ENCODE measurements at regions of chr12 and their contacts with region 1.

Region 1: DNA sequence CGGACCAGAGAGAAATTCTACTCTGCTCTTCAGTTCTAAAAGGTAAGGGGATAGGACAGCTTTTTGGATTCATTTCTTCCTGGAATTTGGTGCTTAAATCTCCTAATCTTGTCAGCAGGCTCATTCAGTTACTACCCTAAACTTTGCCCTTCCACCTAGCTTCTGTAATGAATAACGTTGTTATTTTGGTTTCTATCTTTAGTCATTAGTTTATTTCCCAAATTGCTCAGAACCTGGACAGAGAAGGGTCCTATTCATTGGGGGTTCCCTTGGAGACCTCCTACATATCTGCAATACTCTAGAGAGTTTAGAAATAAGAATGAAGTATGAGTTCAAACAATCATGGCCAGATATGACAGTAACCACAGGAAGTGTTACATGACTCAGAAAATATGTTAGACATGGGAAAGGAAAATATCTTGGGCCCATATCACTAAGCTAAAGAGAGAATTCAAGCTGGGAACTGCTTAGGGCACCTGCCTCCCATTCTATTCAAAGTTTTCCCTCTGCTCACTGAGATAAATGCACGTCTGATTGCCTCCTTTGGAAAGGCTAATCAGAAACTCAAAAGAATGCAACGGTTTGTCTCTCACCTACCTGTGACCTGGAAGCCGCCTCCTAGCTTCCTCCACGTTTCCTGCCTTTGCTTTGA is 87.9 kb downstream of the GAS2L3 start:
- DNase-seq: no peak
- ATAC-seq: no peak
- H3K4me3 ChIP-seq: no peak overlapping the region
- H3K27ac ChIP-seq: no peak overlapping the region
- H3K4me1 ChIP-seq: no peaks in the 10 kb centered on the region
- H3K27me3 ChIP-seq: no peaks in the 10 kb centered on the region
- CTCF ChIP-seq: no peak

Region 2: DNA sequence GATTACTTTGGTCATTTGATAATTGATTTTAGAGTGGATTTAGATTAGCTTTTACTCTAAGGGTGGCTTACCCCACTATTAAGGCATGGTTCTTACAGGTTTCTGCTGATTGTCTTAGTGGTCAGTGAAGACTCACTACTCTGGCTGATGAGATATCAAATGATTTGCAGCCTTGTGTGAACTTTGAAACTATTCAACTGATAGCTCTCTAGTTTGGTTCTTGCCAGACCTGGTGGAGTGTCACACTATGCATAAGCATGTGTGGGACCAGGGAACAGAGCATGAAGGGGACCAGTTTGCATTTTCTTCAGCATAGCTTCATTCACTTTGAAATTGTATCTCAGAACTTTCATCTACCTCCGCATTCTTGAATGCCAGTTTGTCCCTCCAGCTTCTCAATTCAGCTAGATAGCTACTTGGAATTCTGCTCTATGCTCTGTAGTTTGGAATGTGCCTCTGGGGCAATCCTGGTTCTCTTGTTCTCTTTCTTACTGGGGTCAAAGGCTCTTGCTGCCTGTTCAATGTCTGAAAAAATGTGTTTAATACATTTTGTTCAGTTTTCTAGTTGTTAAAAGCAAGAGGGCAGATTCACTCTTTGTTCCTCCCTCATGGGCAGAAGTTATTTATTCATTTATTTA is 381.7 kb before region 1 on chr12:
- CTCF ChIA-PET with region 1: interaction called, 10 read pairs
- POLR2A ChIA-PET with region 1: no interaction called
- in situ Hi-C with region 1: no loop called
- intact Hi-C with region 1: no loop called
- DNase-seq: no peak
- ATAC-seq: no peak
- H3K4me3 ChIP-seq: no peak overlapping the region
- H3K27ac ChIP-seq: no peak overlapping the region
- H3K4me1 ChIP-seq: peaks cover 6% of the 10 kb centered on the region; the same call in 1 of the 2 replicates
- H3K27me3 ChIP-seq: no peaks in the 10 kb centered on the region
- CTCF ChIP-seq: no peak

Region 3: DNA sequence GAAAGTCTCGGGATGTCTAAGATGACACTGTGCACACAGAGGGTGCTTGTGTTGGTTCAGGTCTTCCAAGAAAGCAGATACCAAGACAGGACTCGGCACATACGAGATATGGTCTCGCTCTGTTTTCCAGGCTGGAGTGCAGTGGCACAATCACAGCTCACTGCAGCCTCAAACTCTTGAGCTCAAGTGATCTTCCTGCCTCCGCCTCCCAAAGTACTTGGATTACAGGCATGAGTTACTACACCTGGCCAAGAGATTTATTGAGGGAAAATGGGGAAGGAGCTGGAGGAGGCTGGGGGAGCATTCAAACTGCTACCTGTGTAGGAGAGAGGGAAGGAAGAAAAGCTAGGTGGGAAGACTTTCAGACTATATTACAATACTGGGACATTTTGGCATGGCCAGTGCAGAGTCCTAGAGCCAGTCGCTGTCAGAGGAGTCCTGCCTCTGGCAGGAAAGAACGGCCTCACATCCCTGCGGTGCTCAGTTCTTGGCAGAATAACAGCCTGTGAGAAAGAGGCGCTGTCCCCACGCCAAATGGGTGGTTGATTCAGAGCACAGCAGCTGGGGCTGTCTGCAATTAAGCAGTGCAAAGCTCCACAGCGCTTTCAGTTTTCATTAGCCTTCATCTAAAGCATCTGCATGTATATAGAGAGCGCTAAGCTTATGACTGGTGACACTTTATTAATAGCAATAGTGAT is 286.2 kb before region 1 on chr12:
- CTCF ChIA-PET with region 1: no interaction called
- POLR2A ChIA-PET with region 1: interaction called, 10 read pairs
- in situ Hi-C with region 1: no loop called
- intact Hi-C with region 1: no loop called
- DNase-seq: no peak
- ATAC-seq: no peak; the same call in 1 of the 2 replicates
- H3K4me3 ChIP-seq: no peak overlapping the region
- H3K27ac ChIP-seq: no peak overlapping the region
- H3K4me1 ChIP-seq: no peaks in the 10 kb centered on the region
- H3K27me3 ChIP-seq: peaks cover 2% of the 10 kb centered on the region; the same call in 1 of the 2 replicates
- CTCF ChIP-seq: no peak

Region 4: GRCh38 chr12:100827901-100828520 is 166.6 kb after region 1 on chr12:
- CTCF ChIA-PET with region 1: no interaction called
- POLR2A ChIA-PET with region 1: no interaction called
- in situ Hi-C with region 1: no loop called
- intact Hi-C with region 1: no loop called
- DNase-seq: peak; percentile 17
- ATAC-seq: peak; percentile 60; the same call in 1 of the 2 replicates
- H3K4me3 ChIP-seq: no peak overlapping the region
- H3K27ac ChIP-seq: no peak overlapping the region
- H3K4me1 ChIP-seq: no peaks in the 10 kb centered on the region
- H3K27me3 ChIP-seq: no peaks in the 10 kb centered on the region; the same call in 1 of the 2 replicates
- CTCF ChIP-seq: peak; percentile 80